T-cell (primary cell): ENCODE measurements at regions of chr2 and their contacts with region 1.

Region 1: DNA sequence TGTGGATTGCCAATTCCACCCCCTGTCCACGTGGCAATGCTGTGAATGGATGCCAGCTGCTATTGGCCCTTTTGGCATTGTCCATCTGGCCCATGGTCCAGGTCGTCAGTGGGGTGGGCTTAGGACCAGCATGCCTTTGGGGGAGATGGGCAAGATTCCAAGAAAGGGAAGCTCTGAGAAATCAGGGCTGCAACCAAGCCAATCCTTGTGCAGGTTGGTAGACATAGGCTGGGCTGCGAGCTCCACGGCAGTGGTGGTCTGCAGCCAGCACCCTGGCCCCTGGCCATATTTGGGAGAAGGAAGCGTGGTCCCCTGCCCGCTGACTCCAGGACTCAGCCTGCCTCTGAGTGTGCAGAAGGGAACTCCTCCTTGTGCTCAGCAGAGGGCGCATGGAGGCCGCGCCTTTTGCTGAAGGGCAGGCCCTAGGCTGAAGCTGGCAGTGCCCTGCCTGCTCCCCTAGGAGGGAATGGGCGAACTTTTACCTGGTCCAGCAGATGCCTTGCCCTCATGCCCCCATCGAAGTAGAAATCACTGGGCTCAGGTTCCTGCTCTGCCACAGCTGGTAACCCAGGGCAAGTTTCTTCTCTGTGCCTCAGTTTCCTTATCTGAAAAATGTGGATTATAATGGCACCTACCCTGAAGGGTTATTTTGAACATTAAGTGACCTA is 5.4 kb downstream of the SPR start:
- DNase-seq: peak in 28 of 35 experiments; percentile 23 to 71 (median 44)
- ATAC-seq: peak; percentile 56 to 88 (median 78)
- H3K4me3 ChIP-seq: no peak overlapping the region
- H3K4me3 Mint-ChIP-seq: no peak overlapping the region
- H3K27ac ChIP-seq: no peak overlapping the region
- H3K27ac Mint-ChIP-seq: no peak overlapping the region
- H3K4me1 ChIP-seq: peaks cover 0 to 11% of the 10 kb centered on the region in 2 experiments
- H3K4me1 Mint-ChIP-seq: peaks cover 5 to 12% (median 10%) of the 10 kb centered on the region in 3 donors
- H3K27me3 ChIP-seq: peaks cover 10 to 84% of the 10 kb centered on the region in 2 experiments
- H3K27me3 Mint-ChIP-seq: peaks cover 47 to 73% of the 10 kb centered on the region in 2 donors

Region 2: DNA sequence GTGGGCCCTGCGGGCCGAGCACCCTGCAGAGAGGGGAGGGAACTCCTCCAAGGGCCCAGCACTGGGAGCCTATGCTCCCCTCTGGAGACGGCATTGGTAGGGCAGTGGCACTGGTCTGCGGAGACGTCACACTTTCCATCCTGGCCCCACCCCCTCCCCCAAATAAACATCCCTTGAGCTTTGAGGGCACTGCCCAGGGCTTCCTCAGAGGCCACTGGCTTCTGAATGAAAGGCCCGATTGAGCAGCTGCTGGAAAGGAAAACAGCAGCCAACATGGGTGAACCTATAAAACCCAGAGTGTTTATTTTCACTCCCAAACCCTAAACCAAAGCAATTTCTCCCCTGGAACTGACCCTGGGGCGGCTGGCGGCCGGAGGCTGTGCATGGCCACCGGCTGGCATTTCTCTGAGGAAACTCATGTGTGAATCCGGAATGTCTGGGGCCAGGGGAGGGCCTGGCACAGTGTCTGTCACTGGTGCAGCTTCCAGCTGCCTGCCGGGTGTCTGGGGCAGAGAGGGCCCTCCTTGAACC is 1300.4 kb before region 1 on chr2:
- CTCF ChIA-PET with region 1: no interaction called
- POLR2A ChIA-PET with region 1: no interaction called
- DNase-seq: no peak
- ATAC-seq: no peak
- H3K4me3 ChIP-seq: no peak overlapping the region
- H3K4me3 Mint-ChIP-seq: no peak overlapping the region
- H3K27ac ChIP-seq: no peak overlapping the region
- H3K27ac Mint-ChIP-seq: no peak overlapping the region
- H3K4me1 ChIP-seq: no peaks in the 10 kb centered on the region
- H3K4me1 Mint-ChIP-seq: no peaks in the 10 kb centered on the region
- H3K27me3 ChIP-seq: peaks cover 0 to 31% of the 10 kb centered on the region in 2 experiments
- H3K27me3 Mint-ChIP-seq: peaks cover 2 to 9% of the 10 kb centered on the region in 2 donors

Region 3: GRCh38 chr2:72973566-72974435 is 81.2 kb after region 1 on chr2:
- CTCF ChIA-PET with region 1: interaction called, 7 to 10 read pairs
- POLR2A ChIA-PET with region 1: no interaction called
- DNase-seq: peak in 21 of 35 experiments; percentile 5 to 55 (median 21)
- ATAC-seq: peak in 3 of 4 experiments; percentile 46 to 73 (median 65)
- H3K4me3 ChIP-seq: no peak overlapping the region
- H3K4me3 Mint-ChIP-seq: no peak overlapping the region
- H3K27ac ChIP-seq: no peak overlapping the region
- H3K27ac Mint-ChIP-seq: no peak overlapping the region
- H3K4me1 ChIP-seq: no peaks in the 10 kb centered on the region
- H3K4me1 Mint-ChIP-seq: no peaks in the 10 kb centered on the region
- H3K27me3 ChIP-seq: peaks cover 0 to 21% of the 10 kb centered on the region in 2 experiments
- H3K27me3 Mint-ChIP-seq: no peaks in the 10 kb centered on the region